ENCODE measurements at regions of chr3 and their contacts with region 1.

Region 1: DNA sequence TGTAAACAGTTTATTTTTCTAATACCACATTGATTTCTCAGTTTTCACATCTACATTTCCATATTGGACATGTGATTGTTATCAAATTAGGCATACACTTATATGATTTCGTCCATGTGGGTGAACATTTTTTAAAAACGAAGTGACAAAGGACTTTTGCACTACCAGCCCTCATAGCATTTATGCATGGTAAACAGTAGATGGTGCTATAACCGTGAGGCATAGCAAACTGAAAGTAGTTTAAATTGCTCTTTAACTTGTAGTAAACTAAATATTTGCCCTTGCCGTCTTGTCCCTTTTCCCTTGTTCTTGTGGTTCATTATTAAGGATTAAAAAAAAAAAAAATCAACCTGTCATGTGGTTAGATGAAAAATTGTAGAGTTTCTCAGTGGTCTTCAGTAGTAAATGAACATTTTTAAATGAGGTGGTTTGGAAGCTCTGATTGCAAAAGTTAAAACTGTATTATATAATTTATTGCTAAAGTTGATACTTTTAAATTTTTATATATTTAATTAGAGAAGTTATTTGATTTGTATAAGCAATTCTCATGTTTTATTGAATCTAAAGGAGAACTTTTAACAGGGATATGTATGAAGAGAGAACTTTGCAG is 24.0 kb downstream of the STX19 start:
- DNase-seq: peak in 2 of 9 experiments; percentile 61 to 76
- ATAC-seq: peak; percentile 88
- H3K4me3 ChIP-seq: peak overlapping the region in 1 of 2 experiments; percentile 18
- H3K4me3 Mint-ChIP-seq: peak overlapping the region; percentile 77
- H3K27ac ChIP-seq: no peak overlapping the region
- H3K27ac Mint-ChIP-seq: no peak overlapping the region
- H3K4me1 ChIP-seq: no peaks in the 10 kb centered on the region
- H3K4me1 Mint-ChIP-seq: peaks cover 4% of the 10 kb centered on the region
- H3K27me3 ChIP-seq: no peaks in the 10 kb centered on the region
- H3K27me3 Mint-ChIP-seq: no peaks in the 10 kb centered on the region
- CTCF ChIP-seq: peak; percentile 92

Region 2: DNA sequence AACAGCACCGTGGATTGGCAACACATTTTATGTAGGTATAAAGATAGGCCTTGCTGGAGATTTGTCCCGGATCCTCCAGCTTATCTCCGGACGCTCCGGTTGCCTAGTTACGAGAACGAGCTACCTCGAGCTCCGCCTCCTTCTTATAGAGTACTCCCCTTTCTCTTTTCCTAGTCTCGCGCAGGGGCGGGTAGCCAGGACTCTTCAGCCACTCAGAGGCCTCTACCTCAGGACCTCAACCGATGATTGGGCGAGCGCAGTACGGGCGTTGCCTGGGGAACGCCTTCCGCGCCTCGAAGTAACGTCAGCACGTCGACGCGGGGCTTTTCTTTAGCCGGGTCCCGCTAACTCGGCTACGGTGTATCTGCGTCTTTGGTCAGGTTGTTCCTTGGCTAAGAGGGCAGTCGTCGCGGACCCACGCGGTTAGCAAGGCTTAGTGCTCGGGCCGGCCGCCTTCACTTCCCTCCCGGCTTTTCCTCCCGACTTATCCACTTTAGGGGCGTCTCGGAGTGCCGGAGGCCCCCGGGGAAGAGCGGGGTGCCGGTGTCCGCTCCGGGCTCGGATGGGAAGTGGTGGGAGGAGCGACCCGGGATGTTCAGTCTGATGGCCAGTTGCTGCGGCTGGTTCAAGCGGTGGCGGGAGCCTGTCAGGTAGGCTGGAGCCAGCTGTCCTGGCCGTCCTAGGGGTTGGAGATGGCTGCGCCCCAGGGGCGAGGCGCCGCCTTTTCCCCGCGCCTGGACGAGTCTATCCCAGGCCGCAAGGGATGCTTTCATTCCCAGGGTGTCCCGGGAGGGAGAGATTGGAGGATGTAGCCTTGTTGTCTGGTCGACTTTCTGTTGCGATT is 24.4 kb before region 1 on chr3 and contains the start of gene ARL13B:
- CTCF ChIA-PET with region 1: interaction called, 3 read pairs
- POLR2A ChIA-PET with region 1: no interaction called
- intact Hi-C with region 1: loop called (anchors 2 kb)
- DNase-seq: peak; percentile 85 to 98 (median 92)
- ATAC-seq: peak; percentile 100
- H3K4me3 ChIP-seq: peak within 1 kb of the TSS; percentile 86
- H3K4me3 Mint-ChIP-seq: peak within 1 kb of the TSS; percentile 91
- H3K27ac ChIP-seq: peak within 1 kb of the TSS; percentile 83 to 94
- H3K27ac Mint-ChIP-seq: peak within 1 kb of the TSS; percentile 93
- H3K4me1 ChIP-seq: peaks cover 5% of the 10 kb centered on the region
- H3K4me1 Mint-ChIP-seq: peaks cover 25% of the 10 kb centered on the region
- H3K27me3 ChIP-seq: no peaks in the 10 kb centered on the region
- H3K27me3 Mint-ChIP-seq: no peaks in the 10 kb centered on the region
- CTCF ChIP-seq: no peak
- total RNA-seq, gene ARL13B: 5.3 to 6.5 TPM

Region 3: DNA sequence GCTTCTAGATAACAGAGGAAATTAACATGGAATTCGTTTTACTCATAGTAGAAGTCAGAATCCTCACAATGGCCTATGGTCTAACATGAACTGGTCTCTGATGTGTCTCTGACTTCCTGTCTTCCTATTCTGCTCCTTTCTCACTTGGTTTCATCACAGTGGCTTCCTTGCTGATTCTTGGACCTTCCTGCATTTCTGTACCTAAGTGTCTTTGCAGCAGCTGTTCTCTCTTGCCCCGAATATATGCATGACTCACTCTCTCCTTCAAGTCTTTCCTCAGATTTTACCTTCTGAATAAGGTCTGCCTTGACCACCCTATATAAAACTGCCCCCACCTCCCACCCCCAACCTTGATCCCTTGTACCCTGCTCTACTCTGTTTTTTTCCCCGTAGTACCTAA is 10.3 kb before region 1 on chr3:
- CTCF ChIA-PET with region 1: interaction called, 13 read pairs
- POLR2A ChIA-PET with region 1: no interaction called
- intact Hi-C with region 1: no loop called
- DNase-seq: no peak
- ATAC-seq: no peak
- H3K4me3 ChIP-seq: no peak overlapping the region
- H3K4me3 Mint-ChIP-seq: no peak overlapping the region
- H3K27ac ChIP-seq: no peak overlapping the region
- H3K27ac Mint-ChIP-seq: no peak overlapping the region
- H3K4me1 ChIP-seq: no peaks in the 10 kb centered on the region
- H3K4me1 Mint-ChIP-seq: peaks cover 3% of the 10 kb centered on the region
- H3K27me3 ChIP-seq: no peaks in the 10 kb centered on the region
- H3K27me3 Mint-ChIP-seq: no peaks in the 10 kb centered on the region
- CTCF ChIP-seq: no peak

Region 4: GRCh38 chr3:94069194-94069813 is 64.9 kb after region 1 on chr3:
- CTCF ChIA-PET with region 1: interaction called, 26 read pairs
- POLR2A ChIA-PET with region 1: no interaction called
- intact Hi-C with region 1: loop called (anchors 1 kb)
- DNase-seq: peak in 1 of 9 experiments; percentile 42
- ATAC-seq: peak; percentile 17
- H3K4me3 ChIP-seq: no peak overlapping the region
- H3K4me3 Mint-ChIP-seq: no peak overlapping the region
- H3K27ac ChIP-seq: no peak overlapping the region
- H3K27ac Mint-ChIP-seq: peak overlapping the region; percentile 5
- H3K4me1 ChIP-seq: peaks cover 9% of the 10 kb centered on the region
- H3K4me1 Mint-ChIP-seq: peaks cover 74% of the 10 kb centered on the region
- H3K27me3 ChIP-seq: no peaks in the 10 kb centered on the region
- H3K27me3 Mint-ChIP-seq: no peaks in the 10 kb centered on the region
- CTCF ChIP-seq: peak; percentile 82

Region 5: DNA sequence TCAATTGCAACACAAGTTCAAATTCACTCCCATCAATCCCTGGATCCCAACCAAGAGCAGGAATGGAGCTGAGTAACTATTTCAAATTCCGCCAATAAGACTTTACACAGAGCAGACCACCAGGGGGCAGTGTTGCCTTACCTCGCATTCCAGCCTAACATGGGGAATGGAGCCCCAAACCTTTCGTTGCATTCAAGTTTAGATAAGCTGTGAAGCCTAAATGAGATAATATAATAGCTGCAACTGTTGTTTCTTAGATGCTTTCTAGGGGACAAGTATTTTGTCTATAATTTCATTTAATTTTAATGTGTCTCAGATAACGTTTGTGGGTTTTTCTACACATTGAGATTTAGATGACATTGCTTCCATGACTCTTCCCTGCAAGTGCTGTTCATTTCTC is 245.2 kb after region 1 on chr3:
- CTCF ChIA-PET with region 1: interaction called, 4 read pairs
- POLR2A ChIA-PET with region 1: no interaction called
- intact Hi-C with region 1: loop called in 1 of 2 experiments (anchors 10 kb)
- DNase-seq: peak in 8 of 9 experiments; percentile 37 to 64 (median 53)
- ATAC-seq: no peak
- H3K4me3 ChIP-seq: no peak overlapping the region
- H3K4me3 Mint-ChIP-seq: no peak overlapping the region
- H3K27ac ChIP-seq: no peak overlapping the region
- H3K27ac Mint-ChIP-seq: no peak overlapping the region
- H3K4me1 ChIP-seq: no peaks in the 10 kb centered on the region
- H3K4me1 Mint-ChIP-seq: no peaks in the 10 kb centered on the region
- H3K27me3 ChIP-seq: no peaks in the 10 kb centered on the region
- H3K27me3 Mint-ChIP-seq: peaks cover 19% of the 10 kb centered on the region
- CTCF ChIP-seq: peak; percentile 78

Region 6: GRCh38 chr3:94285870-94286269 is 281.5 kb after region 1 on chr3:
- CTCF ChIA-PET with region 1: no interaction called
- POLR2A ChIA-PET with region 1: no interaction called
- intact Hi-C with region 1: no loop called
- DNase-seq: no peak
- ATAC-seq: no peak
- H3K4me3 ChIP-seq: no peak overlapping the region
- H3K4me3 Mint-ChIP-seq: no peak overlapping the region
- H3K27ac ChIP-seq: no peak overlapping the region
- H3K27ac Mint-ChIP-seq: no peak overlapping the region
- H3K4me1 ChIP-seq: no peaks in the 10 kb centered on the region
- H3K4me1 Mint-ChIP-seq: no peaks in the 10 kb centered on the region
- H3K27me3 ChIP-seq: no peaks in the 10 kb centered on the region
- H3K27me3 Mint-ChIP-seq: peaks cover 2% of the 10 kb centered on the region
- CTCF ChIP-seq: no peak

Region 7: GRCh38 chr3:94433811-94434210 is 429.4 kb after region 1 on chr3:
- CTCF ChIA-PET with region 1: no interaction called
- POLR2A ChIA-PET with region 1: no interaction called
- intact Hi-C with region 1: no loop called
- DNase-seq: no peak
- ATAC-seq: no peak
- H3K4me3 ChIP-seq: no peak overlapping the region
- H3K4me3 Mint-ChIP-seq: no peak overlapping the region
- H3K27ac ChIP-seq: no peak overlapping the region
- H3K27ac Mint-ChIP-seq: no peak overlapping the region
- H3K4me1 ChIP-seq: no peaks in the 10 kb centered on the region
- H3K4me1 Mint-ChIP-seq: no peaks in the 10 kb centered on the region
- H3K27me3 ChIP-seq: no peaks in the 10 kb centered on the region
- H3K27me3 Mint-ChIP-seq: no peaks in the 10 kb centered on the region
- CTCF ChIP-seq: no peak

Measured in CD8-positive, alpha-beta T cell (primary cell).